ENCODE measurements at regions of chr3 and their contacts with region 1.

Region 1: GRCh38 chr3:186849374-186849975 is 7.0 kb downstream of the ADIPOQ start:
- DNase-seq: no peak
- ATAC-seq: peak in 3 of 4 donors; percentile 50 to 76 (median 68)
- H3K4me3 ChIP-seq: no peak overlapping the region
- H3K27ac ChIP-seq: no peak overlapping the region
- H3K4me1 ChIP-seq: no peaks in the 10 kb centered on the region
- H3K27me3 ChIP-seq: peaks cover 0 to 5% (median 0%) of the 10 kb centered on the region in 9 donors
- CTCF ChIP-seq: peak; percentile 23 to 73 (median 61)
- POLR2A ChIP-seq: no peak

Region 2: GRCh38 chr3:186493525-186494255 is 355.8 kb before region 1 on chr3:
- intact Hi-C with region 1: no loop called
- DNase-seq: no peak
- ATAC-seq: peak in 1 of 4 donors; percentile 31
- H3K4me3 ChIP-seq: no peak overlapping the region
- H3K27ac ChIP-seq: peak overlapping the region in 5 of 12 donors; percentile 5 to 75 (median 45)
- H3K4me1 ChIP-seq: peaks cover 0 to 8% (median 0%) of the 10 kb centered on the region in 12 donors
- H3K27me3 ChIP-seq: no peaks in the 10 kb centered on the region
- CTCF ChIP-seq: no peak
- POLR2A ChIP-seq: no peak

Region 3: DNA sequence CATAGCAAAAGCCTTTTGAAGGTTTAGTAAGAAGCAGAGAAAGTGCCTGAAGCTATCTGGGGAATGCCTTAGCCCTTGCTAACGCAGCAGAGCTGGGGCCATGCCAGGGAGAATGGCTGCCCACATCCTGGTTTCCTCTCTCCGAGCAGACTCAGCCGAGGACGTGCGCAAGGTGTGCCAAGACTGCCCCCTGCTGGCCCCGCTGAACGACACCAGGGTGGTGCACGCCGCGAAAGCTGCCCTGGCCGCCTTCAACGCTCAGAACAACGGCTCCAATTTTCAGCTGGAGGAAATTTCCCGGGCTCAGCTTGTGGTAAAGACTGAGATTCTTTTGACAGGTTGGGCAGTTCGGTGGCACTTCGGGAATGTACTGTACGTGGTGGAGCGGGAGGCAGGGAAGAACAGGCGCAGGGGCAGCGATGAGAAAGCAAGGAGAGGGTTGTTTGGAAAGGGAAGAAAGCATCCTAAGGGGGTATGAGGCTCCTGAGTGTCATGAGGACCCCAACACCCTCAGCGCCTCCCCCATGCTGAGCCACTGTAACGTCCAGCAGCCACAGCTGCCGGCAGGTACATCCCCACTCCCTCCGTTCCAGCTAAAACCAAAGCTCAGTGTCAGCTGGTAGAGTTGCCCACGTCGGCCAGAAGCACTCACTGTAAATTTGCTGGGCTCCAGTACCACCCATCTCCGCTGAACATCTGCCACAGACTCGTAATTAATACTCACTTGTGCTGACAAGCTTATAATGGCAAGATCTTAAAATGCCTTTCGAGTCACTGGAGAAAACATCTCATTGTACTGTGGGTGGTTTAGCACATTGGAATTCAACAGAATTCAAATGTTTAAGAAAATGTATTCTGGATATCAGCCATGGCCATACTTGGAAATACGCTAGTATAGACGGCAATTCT is 232.2 kb before region 1 on chr3:
- intact Hi-C with region 1: no loop called
- DNase-seq: peak; percentile 75 to 92 (median 84)
- ATAC-seq: peak; percentile 83 to 97 (median 96)
- H3K4me3 ChIP-seq: peak overlapping the region in 5 of 12 donors; percentile 2 to 30 (median 27)
- H3K27ac ChIP-seq: peak overlapping the region in 1 of 12 donors; percentile 25
- H3K4me1 ChIP-seq: peaks cover 0 to 19% (median 4%) of the 10 kb centered on the region in 12 donors
- H3K27me3 ChIP-seq: peaks cover 0 to 46% (median 0%) of the 10 kb centered on the region in 9 donors
- CTCF ChIP-seq: peak; percentile 74 to 90 (median 82)
- POLR2A ChIP-seq: no peak

Region 4: GRCh38 chr3:186790261-186790981 is 59.1 kb before region 1 on chr3:
- intact Hi-C with region 1: no loop called
- DNase-seq: no peak
- ATAC-seq: peak in 3 of 4 donors; percentile 16 to 44 (median 33)
- H3K4me3 ChIP-seq: no peak overlapping the region
- H3K27ac ChIP-seq: no peak overlapping the region
- H3K4me1 ChIP-seq: peaks cover 4 to 45% (median 32%) of the 10 kb centered on the region in 12 donors
- H3K27me3 ChIP-seq: no peaks in the 10 kb centered on the region
- CTCF ChIP-seq: no peak
- POLR2A ChIP-seq: no peak

Region 5: DNA sequence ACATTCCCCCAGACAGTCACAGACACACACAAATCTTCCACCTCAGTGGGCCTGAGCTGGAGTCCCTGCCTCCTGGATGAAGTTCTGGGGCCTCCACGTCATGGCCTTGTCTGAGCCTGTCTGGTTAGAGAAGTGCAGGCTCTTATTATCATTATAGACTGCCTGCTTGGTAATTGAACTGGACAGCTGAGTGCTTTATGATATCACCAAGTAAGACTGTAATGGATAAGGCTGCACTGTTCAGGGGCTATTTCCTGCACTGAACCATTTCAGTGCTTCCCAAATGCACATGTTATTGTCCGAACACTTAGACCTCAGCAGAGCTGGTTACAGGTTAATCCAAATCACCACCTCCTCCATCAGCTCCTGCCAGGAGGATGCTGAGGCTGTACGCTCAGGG is 72.1 kb after region 1 on chr3:
- intact Hi-C with region 1: loop called in 7 of 10 experiments (anchors 5 to 10 kb)
- DNase-seq: no peak
- ATAC-seq: no peak
- H3K4me3 ChIP-seq: no peak overlapping the region
- H3K27ac ChIP-seq: no peak overlapping the region
- H3K4me1 ChIP-seq: no peaks in the 10 kb centered on the region
- H3K27me3 ChIP-seq: no peaks in the 10 kb centered on the region
- CTCF ChIP-seq: no peak
- POLR2A ChIP-seq: no peak

Region 6: GRCh38 chr3:186976837-186977750 is 127.6 kb after region 1 on chr3:
- intact Hi-C with region 1: no loop called
- DNase-seq: peak; percentile 68 to 90 (median 80)
- ATAC-seq: peak; percentile 85 to 92 (median 88)
- H3K4me3 ChIP-seq: peak overlapping the region in 8 of 12 donors; percentile 1 to 28 (median 19)
- H3K27ac ChIP-seq: peak overlapping the region; percentile 80 to 93 (median 90)
- H3K4me1 ChIP-seq: peaks cover 15 to 78% (median 39%) of the 10 kb centered on the region in 12 donors
- H3K27me3 ChIP-seq: no peaks in the 10 kb centered on the region
- CTCF ChIP-seq: peak in 7 of 12 donors; percentile 4 to 19 (median 13)
- POLR2A ChIP-seq: no peak

Region 7: DNA sequence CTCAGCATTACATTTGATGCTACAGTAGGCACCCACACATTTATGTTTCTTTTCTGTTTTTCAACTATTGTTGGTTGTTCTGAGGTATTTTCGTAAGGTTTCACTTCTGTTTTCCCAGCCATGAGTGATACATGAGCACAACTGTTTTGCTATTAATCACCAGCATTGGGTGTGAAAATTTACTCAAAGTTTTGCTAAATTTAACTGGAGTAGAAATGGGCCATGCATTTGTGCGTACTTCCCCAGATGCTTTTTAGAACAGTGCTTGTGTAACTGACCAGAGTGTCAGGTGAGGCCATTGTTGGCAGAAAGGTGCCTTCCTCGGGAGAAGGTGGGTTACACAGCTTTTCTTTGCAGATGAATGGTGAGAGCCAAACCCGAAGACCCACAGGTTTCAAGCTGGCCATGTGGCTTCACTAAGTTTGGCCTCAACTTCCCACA is 151.3 kb after region 1 on chr3:
- intact Hi-C with region 1: loop called in 1 of 10 experiments (anchors 10 kb)
- DNase-seq: no peak
- ATAC-seq: peak in 1 of 4 donors; percentile 14
- H3K4me3 ChIP-seq: no peak overlapping the region
- H3K27ac ChIP-seq: peak overlapping the region in 2 of 12 donors; percentile 10 to 67
- H3K4me1 ChIP-seq: peaks cover 0 to 51% (median 13%) of the 10 kb centered on the region in 12 donors
- H3K27me3 ChIP-seq: no peaks in the 10 kb centered on the region
- CTCF ChIP-seq: no peak
- POLR2A ChIP-seq: no peak

Region 8: DNA sequence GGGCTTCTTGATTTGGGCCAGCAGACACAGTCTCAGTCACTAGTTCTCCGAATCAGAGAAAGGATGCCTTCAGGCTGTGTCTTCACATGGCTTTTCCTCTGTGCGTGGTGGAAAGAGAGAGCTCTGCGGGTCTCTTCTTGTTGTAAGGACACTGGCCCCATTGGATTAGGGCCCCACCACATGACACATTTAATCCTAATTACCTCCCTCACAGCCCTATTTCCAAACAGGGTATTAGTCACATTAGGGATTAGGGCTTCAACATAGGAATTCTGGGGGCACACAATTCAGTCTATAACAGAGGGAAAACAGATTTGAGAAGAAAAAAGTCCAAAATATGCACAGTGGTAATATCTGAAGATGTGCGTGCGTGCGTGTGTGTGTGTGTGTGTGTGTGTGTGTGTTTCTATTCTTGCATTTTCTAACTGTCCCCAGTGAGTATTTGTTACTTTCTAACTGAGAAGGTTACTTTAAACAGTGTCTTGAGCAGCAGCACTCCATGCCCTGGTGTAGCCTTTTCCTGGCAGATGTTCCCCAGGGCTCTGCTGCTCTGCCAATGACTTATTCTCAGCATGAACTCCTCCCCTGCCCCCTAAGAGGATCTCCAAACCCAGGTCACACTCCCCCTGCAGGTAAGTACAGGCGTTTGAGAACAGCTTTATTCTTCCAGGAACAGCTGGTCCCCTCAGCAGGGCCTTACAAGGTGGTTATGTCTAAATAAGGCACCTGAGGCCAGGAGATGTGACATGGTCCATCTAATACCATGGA is 216.9 kb after region 1 on chr3:
- intact Hi-C with region 1: loop called in 2 of 10 experiments (anchors 10 kb)
- DNase-seq: peak in 2 of 5 donors; percentile 34 to 55
- ATAC-seq: peak in 3 of 4 donors; percentile 62 to 84 (median 66)
- H3K4me3 ChIP-seq: no peak overlapping the region
- H3K27ac ChIP-seq: no peak overlapping the region
- H3K4me1 ChIP-seq: peaks cover 0 to 36% (median 14%) of the 10 kb centered on the region in 12 donors
- H3K27me3 ChIP-seq: no peaks in the 10 kb centered on the region
- CTCF ChIP-seq: peak in 8 of 12 donors; percentile 9 to 45 (median 21)
- POLR2A ChIP-seq: no peak

Region 9: DNA sequence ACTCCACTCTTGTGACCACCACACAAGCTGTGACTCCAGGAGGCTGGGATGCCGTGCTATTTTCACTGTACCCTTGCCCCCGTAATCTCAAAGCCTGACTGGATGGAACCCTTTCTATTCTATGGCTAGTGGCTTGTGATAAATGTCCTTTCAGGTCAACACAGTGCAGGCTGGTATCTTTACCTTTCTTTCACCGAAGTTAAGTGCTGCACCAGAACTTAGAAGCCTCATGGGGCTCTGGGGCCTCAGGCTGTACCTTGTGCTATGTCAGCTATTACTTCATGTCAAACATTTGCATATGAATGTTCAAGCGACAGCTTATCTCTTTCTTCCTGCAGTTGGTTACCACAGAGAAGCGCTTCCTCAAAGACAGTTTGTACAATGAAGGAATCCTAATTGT is 223.0 kb after region 1 on chr3:
- intact Hi-C with region 1: loop called in 2 of 10 experiments (anchors 10 kb)
- DNase-seq: no peak
- ATAC-seq: no peak
- H3K4me3 ChIP-seq: no peak overlapping the region
- H3K27ac ChIP-seq: no peak overlapping the region
- H3K4me1 ChIP-seq: peaks cover 0 to 6% (median 0%) of the 10 kb centered on the region in 12 donors
- H3K27me3 ChIP-seq: no peaks in the 10 kb centered on the region
- CTCF ChIP-seq: no peak
- POLR2A ChIP-seq: no peak

Region 10: GRCh38 chr3:187164885-187165543 is 315.5 kb after region 1 on chr3:
- intact Hi-C with region 1: loop called (anchors 1 to 5 kb)
- DNase-seq: peak in 1 of 5 donors; percentile 31
- ATAC-seq: peak in 3 of 4 donors; percentile 18 to 45 (median 35)
- H3K4me3 ChIP-seq: no peak overlapping the region
- H3K27ac ChIP-seq: no peak overlapping the region
- H3K4me1 ChIP-seq: peaks cover 0 to 25% (median 6%) of the 10 kb centered on the region in 12 donors
- H3K27me3 ChIP-seq: no peaks in the 10 kb centered on the region
- CTCF ChIP-seq: peak; percentile 54 to 87 (median 77)
- POLR2A ChIP-seq: no peak

Measured in heart left ventricle (tissue), 16 donors.